Mucosa of descending colon (tissue), 3 donors: ENCODE measurements at regions of chr6 and their contacts with region 1.

Region 1: GRCh38 chr6:104525677-104526312 is 333.9 kb downstream of the HACE1 start:
- DNase-seq: peak; percentile 56 to 69 (median 66)
- ATAC-seq: peak; percentile 96
- H3K4me3 ChIP-seq: no peak overlapping the region
- H3K4me1 ChIP-seq: peaks cover 8% of the 10 kb centered on the region
- CTCF ChIP-seq: peak; percentile 62

Region 2: DNA sequence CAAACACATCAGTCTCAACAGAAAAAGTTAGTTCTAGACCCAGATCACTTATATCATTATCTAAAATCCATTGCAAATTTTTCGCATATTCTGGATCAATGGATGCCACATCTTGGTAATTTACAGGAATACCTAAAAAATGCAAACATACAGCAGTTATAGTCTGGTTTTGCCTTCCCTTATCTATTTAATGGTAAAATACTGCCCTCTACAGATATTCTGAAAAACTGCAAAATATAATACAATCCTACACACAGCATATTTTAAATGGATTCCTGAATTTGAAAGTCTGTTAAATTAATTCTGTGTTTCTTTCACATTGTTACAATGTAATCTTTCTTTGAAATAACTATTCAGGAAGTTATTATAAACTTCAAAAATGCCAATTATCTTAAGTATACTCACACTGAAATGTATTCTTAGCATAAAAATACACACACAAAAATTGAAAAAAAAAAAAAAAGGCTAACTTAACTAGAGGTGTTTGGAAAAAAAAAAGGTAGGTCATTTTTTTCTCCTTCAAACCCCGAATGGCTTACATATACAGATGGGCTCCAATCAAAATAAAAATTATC is 245.6 kb after region 1 on chr6:
- intact Hi-C with region 1: loop called in 1 of 2 experiments (anchors 2 kb)
- DNase-seq: no peak
- ATAC-seq: peak; percentile 57
- H3K4me3 ChIP-seq: no peak overlapping the region
- H3K4me1 ChIP-seq: no peaks in the 10 kb centered on the region
- CTCF ChIP-seq: no peak